ENCODE measurements at regions of chr13 and their contacts with region 1.

Region 1: DNA sequence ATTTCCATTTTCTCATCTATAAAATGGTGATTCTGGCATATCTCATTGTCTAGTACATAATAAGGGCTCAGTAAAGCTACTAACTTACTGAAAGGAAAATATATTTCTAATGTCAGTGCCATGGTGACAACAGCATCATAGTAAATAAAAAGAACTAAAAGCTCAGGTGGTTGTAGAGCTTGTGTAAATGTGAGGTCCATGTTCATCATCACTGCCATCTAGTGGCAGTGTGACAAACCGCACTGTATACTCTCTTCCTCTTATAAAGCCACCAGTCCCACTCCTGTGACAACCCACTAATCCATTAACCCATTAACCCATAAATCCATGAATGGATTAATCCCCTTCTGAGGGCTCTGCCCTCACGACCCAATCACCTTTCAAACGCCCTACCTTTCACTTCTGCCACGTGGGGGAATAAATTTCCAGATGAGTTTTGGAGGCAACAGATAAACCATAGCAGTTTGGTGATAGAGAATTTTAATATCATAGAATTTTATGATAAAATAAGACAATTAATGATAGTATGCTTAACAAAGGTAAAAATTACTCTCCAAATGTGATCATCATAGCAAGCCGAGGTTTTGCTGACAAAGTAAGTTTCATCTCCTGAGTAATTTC is 160.4 kb upstream of the SGCG start:
- DNase-seq: peak; percentile 69
- H3K4me3 ChIP-seq: no peak overlapping the region
- H3K27ac ChIP-seq: no peak overlapping the region
- H3K4me1 ChIP-seq: no peaks in the 10 kb centered on the region
- H3K27me3 ChIP-seq: no peaks in the 10 kb centered on the region
- CTCF ChIP-seq: peak; percentile 50 to 87 (median 78)
- EP300 ChIP-seq: no peak
- POLR2A ChIP-seq: no peak

Region 2: GRCh38 chr13:22801402-22802003 is 218.8 kb before region 1 on chr13:
- intact Hi-C with region 1: loop called (anchors 2 kb)
- DNase-seq: no peak
- H3K4me3 ChIP-seq: no peak overlapping the region
- H3K27ac ChIP-seq: no peak overlapping the region
- H3K4me1 ChIP-seq: no peaks in the 10 kb centered on the region
- H3K27me3 ChIP-seq: peaks cover 0 to 5% (median 0%) of the 10 kb centered on the region in 3 donors
- CTCF ChIP-seq: peak in 3 of 4 experiments; percentile 18 to 33 (median 26)
- EP300 ChIP-seq: no peak
- POLR2A ChIP-seq: no peak

Region 3: GRCh38 chr13:22925881-22926747 is 94.2 kb before region 1 on chr13:
- intact Hi-C with region 1: loop called (anchors 5 kb)
- DNase-seq: peak; percentile 94
- H3K4me3 ChIP-seq: peak overlapping the region; percentile 53 to 68 (median 67)
- H3K27ac ChIP-seq: peak overlapping the region; percentile 59 to 89 (median 86)
- H3K4me1 ChIP-seq: peaks cover 0 to 19% (median 14%) of the 10 kb centered on the region in 4 donors
- H3K27me3 ChIP-seq: no peaks in the 10 kb centered on the region
- CTCF ChIP-seq: no peak
- EP300 ChIP-seq: no peak
- POLR2A ChIP-seq: peak in 1 of 2 donors; percentile 21